ENCODE measurements at regions of chr19 and their contacts with region 1.

Region 1: GRCh38 chr19:38142176-38143035 is 81.6 kb downstream of the DPF1 start:
- DNase-seq: peak; percentile 36
- H3K4me3 ChIP-seq: no peak overlapping the region
- CTCF ChIP-seq: peak; percentile 95

Region 2: DNA sequence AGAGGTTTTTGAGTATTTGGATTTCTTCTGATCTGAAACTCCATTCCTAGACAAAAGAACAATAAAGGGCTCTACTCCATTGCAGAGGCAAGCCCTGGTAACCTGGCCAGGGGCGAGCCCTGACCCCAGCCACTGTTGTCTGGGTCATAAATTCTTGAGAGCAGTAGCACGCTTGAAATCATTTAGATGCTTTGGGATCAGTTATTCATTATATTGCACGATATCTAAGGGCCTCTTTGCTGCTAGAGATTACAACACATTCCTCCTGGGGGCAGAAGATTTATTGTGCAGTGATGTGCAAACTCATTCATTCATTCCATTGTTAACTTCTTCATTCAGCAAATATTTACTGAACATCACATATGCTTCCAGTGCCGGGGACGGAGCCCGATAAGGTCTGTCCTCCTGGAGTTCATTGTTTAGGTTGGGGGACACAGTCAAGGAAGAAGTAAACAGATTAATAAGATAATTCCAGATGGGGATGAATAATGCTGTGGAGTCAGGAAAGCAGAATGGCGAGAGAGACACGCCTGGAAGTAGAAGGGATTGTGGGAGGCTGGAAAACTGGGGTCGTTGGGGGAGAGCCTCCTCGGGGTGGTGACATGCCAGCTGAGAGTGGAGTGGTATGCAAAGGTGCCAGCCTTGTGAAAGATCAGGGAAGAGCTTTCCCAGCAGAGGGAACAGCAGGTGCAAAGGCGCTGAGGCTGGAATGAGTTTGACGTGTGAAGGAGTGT is 200.5 kb before region 1 on chr19:
- in situ Hi-C with region 1: no loop called
- DNase-seq: no peak
- H3K4me3 ChIP-seq: no peak overlapping the region
- CTCF ChIP-seq: no peak

Region 3: GRCh38 chr19:38107129-38107528 is 35.3 kb before region 1 on chr19:
- in situ Hi-C with region 1: no loop called
- DNase-seq: no peak
- H3K4me3 ChIP-seq: no peak overlapping the region
- CTCF ChIP-seq: no peak

Region 4: GRCh38 chr19:38263689-38264485 is 121.5 kb after region 1 on chr19:
- in situ Hi-C with region 1: loop called (anchors 25 kb)
- DNase-seq: peak; percentile 41
- H3K4me3 ChIP-seq: peak overlapping the region; percentile 38
- CTCF ChIP-seq: no peak